Prostate gland (tissue), 2 donors: ENCODE measurements at regions of chr6 and their contacts with region 1.

Region 1: GRCh38 chr6:119349323-119350042 is at the start of gene MAN1A1:
- DNase-seq: peak; percentile 87
- H3K4me3 ChIP-seq: peak within 1 kb of the TSS; percentile 79 to 95
- H3K27ac ChIP-seq: peak within 1 kb of the TSS; percentile 84 to 91
- H3K4me1 ChIP-seq: no peaks in the 10 kb centered on the region
- H3K27me3 ChIP-seq: no peaks in the 10 kb centered on the region
- CTCF ChIP-seq: peak in 2 of 4 experiments; percentile 25 to 31
- POLR2A ChIP-seq: peak; percentile 97
- total RNA-seq, gene MAN1A1: 17.9 to 27.9 TPM

Region 2: GRCh38 chr6:119158057-119158848 is 191.2 kb before region 1 on chr6:
- intact Hi-C with region 1: loop called (anchors 5 kb)
- DNase-seq: no peak
- H3K4me3 ChIP-seq: no peak overlapping the region
- H3K27ac ChIP-seq: no peak overlapping the region
- H3K4me1 ChIP-seq: no peaks in the 10 kb centered on the region
- H3K27me3 ChIP-seq: no peaks in the 10 kb centered on the region
- CTCF ChIP-seq: no peak
- POLR2A ChIP-seq: no peak

Region 3: GRCh38 chr6:119541132-119541905 is 191.8 kb after region 1 on chr6:
- intact Hi-C with region 1: loop called (anchors 5 kb)
- DNase-seq: no peak
- H3K4me3 ChIP-seq: no peak overlapping the region
- H3K27ac ChIP-seq: no peak overlapping the region
- H3K4me1 ChIP-seq: no peaks in the 10 kb centered on the region
- H3K27me3 ChIP-seq: no peaks in the 10 kb centered on the region
- CTCF ChIP-seq: no peak
- POLR2A ChIP-seq: no peak

Region 4: GRCh38 chr6:119978274-119978889 is 628.9 kb after region 1 on chr6:
- intact Hi-C with region 1: loop called (anchors 10 kb)
- DNase-seq: no peak
- H3K4me3 ChIP-seq: no peak overlapping the region
- H3K27ac ChIP-seq: no peak overlapping the region
- H3K4me1 ChIP-seq: no peaks in the 10 kb centered on the region
- H3K27me3 ChIP-seq: no peaks in the 10 kb centered on the region
- CTCF ChIP-seq: peak in 3 of 4 experiments; percentile 13 to 47 (median 25)
- POLR2A ChIP-seq: no peak